ENCODE measurements at regions of chr2 and their contacts with region 1.

Region 1: DNA sequence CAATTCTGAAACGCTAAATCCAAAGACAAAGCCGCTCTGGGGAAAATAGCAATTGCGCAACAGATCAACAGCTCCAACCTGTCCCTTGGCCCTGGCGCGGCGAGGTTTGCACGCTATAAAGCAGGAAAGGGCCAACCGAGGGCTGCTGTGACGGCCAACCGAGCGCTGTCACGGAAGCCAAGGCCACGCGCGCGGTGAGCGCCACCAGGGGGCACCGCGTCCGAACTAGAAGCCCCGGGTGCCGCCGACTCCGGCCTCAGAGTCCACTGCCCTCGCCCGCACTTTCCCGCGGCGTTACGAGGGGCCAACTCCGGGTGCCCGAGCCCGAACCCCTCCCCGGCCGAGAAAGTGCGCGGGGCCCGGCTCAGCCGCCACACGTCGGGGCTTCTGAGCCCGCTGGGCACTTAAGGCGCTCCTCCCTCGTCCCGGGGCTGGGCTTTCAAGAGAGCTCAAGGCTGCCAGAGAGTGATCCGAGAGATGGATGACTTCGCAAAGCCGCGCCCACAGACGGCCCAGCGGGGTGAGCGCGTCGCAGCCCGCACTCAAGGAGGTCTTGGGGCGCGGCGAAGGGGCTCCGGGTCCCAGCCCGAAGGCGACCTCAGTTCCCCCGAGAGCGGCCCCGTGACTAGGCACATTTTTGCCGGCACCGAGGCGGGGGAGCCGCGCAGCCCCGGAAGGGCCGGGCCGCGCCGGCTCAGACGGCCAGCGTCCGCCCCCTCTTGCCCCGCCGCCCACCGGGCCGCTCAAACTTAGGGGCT is 897 bp downstream of the NFE2L2 start:
- DNase-seq: peak; percentile 92
- H3K4me3 Mint-ChIP-seq: peak overlapping the region; percentile 93
- H3K27ac Mint-ChIP-seq: peak overlapping the region; percentile 98
- H3K4me1 Mint-ChIP-seq: peaks cover 68% of the 10 kb centered on the region
- H3K27me3 Mint-ChIP-seq: no peaks in the 10 kb centered on the region

Region 2: GRCh38 chr2:176997074-176997791 is 266.4 kb before region 1 on chr2:
- intact Hi-C with region 1: loop called (anchors 5 kb)
- DNase-seq: peak; percentile 2
- H3K4me3 Mint-ChIP-seq: no peak overlapping the region
- H3K27ac Mint-ChIP-seq: peak overlapping the region; percentile 82
- H3K4me1 Mint-ChIP-seq: peaks cover 29% of the 10 kb centered on the region
- H3K27me3 Mint-ChIP-seq: peaks cover 12% of the 10 kb centered on the region

Region 3: DNA sequence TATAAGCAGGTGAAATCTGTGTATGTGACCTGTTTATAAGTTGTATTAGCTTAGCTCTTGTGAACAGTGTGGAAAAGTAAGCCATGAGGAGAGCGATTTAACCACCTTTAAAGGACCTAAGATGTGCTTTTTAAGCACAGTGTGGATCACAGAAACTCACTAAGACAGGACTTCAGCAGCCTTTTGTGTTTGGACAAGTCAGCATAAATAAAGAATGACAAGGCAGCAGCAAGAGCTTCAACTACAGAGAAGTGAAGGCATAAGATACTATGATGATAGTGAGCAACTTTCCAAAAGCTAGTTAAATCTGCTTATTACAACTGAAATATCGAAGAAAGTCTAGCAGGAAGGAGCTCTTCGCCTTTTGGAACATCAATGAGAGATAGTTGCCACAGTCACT is 42.1 kb before region 1 on chr2:
- intact Hi-C with region 1: loop called (anchors 1 kb)
- DNase-seq: no peak
- H3K4me3 Mint-ChIP-seq: no peak overlapping the region
- H3K27ac Mint-ChIP-seq: no peak overlapping the region
- H3K4me1 Mint-ChIP-seq: peaks cover 47% of the 10 kb centered on the region
- H3K27me3 Mint-ChIP-seq: no peaks in the 10 kb centered on the region

Region 4: GRCh38 chr2:177252808-177253531 is 10.7 kb before region 1 on chr2:
- intact Hi-C with region 1: loop called (anchors 1 kb)
- DNase-seq: no peak
- H3K4me3 Mint-ChIP-seq: peak overlapping the region; percentile 63
- H3K27ac Mint-ChIP-seq: peak overlapping the region; percentile 86
- H3K4me1 Mint-ChIP-seq: peaks cover 81% of the 10 kb centered on the region
- H3K27me3 Mint-ChIP-seq: no peaks in the 10 kb centered on the region

Region 5: DNA sequence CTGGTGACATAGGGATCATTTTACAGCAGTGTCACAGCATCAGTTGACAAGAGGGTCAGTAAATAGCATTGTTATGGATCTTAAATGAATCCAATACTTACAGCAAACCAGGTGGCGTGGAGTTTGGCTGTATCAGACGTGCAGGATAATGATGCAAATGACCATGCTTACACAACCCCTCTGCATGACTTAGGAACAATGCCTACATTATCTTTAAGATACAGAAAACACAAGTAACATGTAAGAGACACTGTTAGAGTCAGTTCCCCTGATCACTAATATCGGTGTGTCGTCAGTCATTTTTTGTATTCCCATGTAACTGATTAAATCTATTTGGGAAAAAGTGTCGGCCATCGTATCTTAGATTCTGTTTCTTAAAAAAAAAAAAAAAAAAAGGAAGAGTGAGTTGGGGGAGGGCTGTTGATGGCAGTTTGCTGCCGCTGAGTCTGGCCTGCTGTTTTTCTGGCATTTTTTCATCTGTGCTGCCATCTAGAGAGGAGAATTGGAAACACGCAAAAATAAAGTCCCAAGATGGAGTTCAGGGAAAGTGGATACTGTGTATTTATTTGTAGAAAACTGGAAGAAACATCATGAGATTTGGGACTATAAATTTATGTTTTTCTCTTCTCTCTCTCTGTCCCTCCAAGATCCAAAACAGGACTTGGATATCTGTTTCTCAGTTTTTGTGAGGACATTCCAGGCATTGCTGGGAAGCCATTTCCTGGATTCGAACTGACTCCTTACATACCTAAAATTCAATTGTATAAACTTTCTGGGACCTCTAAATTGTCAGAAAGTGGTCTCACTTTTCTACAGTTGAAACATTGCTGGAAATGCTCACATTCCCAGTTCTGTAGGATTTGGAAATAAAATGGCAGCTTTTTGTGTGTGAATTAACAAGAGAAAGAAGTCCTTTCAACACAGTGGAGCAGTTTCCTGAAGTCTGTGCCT is 68.7 kb after region 1 on chr2:
- intact Hi-C with region 1: loop called (anchors 1 kb)
- DNase-seq: peak; percentile 45
- H3K4me3 Mint-ChIP-seq: no peak overlapping the region
- H3K27ac Mint-ChIP-seq: no peak overlapping the region
- H3K4me1 Mint-ChIP-seq: peaks cover 16% of the 10 kb centered on the region
- H3K27me3 Mint-ChIP-seq: no peaks in the 10 kb centered on the region

Region 6: DNA sequence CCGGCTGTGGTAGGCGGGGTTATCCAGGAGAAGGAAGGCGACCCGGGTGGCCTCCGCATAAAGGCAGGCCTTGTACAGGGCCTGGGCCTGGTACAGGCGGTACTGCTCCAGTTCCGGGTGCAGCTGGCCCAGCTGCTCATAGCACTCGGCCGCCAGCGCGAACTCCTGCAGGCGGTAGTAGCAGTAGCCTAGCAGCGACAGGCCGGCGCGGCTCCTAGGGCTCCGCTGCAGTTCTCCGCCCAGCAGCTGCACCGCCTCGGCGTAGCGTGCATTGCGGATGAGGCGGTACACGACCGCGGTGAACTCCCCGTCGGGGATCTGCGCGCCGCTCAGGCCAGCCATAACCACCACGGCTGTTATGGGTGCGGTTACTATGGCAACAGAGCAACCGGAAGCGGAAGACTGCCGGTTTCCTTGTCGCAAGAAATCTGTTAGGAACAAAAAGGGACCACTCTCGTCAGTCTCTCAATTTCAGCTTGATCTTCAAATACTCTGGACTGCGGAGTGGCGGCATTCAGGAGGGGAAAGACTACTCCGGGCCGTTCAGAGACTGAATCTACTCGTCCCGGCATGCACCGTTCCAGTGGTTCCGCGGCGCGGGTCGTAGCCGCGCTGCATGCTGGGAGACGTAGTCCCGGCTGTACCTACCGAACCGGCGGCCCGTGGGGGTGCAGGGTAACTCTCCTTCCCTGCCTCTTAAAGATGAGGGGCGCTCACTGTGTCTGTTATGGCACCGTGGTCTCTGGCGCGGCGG is 289.0 kb after region 1 on chr2:
- intact Hi-C with region 1: loop called (anchors 1 kb)
- DNase-seq: peak; percentile 88
- H3K4me3 Mint-ChIP-seq: peak overlapping the region; percentile 95
- H3K27ac Mint-ChIP-seq: peak overlapping the region; percentile 100
- H3K4me1 Mint-ChIP-seq: peaks cover 16% of the 10 kb centered on the region
- H3K27me3 Mint-ChIP-seq: no peaks in the 10 kb centered on the region